Esophagus squamous epithelium (tissue), 5 donors: ENCODE measurements at regions of chr13 and their contacts with region 1.

Region 1: DNA sequence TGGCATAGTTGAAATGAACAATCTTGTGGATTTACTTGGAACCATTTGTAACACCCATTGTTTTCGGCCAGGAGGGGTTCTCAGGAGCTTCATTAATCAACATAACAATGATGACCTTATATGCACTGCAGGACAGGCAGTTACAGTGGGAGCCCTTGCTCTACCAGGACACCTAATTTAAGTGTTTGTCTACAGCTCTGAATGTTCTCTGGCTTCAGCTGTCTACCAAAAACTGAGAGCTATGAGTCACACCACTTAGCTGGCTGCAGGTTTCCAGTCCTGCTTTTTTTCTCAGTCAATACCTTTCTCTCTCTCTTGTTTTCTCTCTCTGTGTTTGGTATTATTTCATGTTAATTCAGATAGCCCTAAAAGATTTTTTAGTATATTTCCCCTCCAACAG is 105.4 kb upstream of the MBNL2 start:
- DNase-seq: no peak
- H3K4me3 ChIP-seq: no peak overlapping the region
- H3K27ac ChIP-seq: peak overlapping the region; percentile 2 to 82 (median 72)
- H3K4me1 ChIP-seq: peaks cover 0 to 95% (median 26%) of the 10 kb centered on the region in 3 donors
- H3K27me3 ChIP-seq: no peaks in the 10 kb centered on the region
- CTCF ChIP-seq: no peak
- POLR2A ChIP-seq: no peak

Region 2: GRCh38 chr13:97212601-97213040 is 95.9 kb after region 1 on chr13:
- intact Hi-C with region 1: loop called (anchors 5 kb)
- DNase-seq: no peak
- H3K4me3 ChIP-seq: no peak overlapping the region
- H3K27ac ChIP-seq: no peak overlapping the region
- H3K4me1 ChIP-seq: peaks cover 0 to 6% (median 0%) of the 10 kb centered on the region in 3 donors
- H3K27me3 ChIP-seq: no peaks in the 10 kb centered on the region
- CTCF ChIP-seq: peak in 5 of 6 experiments; percentile 17 to 59 (median 46)
- POLR2A ChIP-seq: no peak